GM13977 (cell line): ENCODE measurements at regions of chr11 and their contacts with region 1.

Region 1: GRCh38 chr11:44609001-44609782 is 43.7 kb downstream of the CD82 start:
- DNase-seq: peak; percentile 61
- CTCF ChIP-seq: no peak

Region 2: GRCh38 chr11:44258190-44258489 is 351.1 kb before region 1 on chr11:
- in situ Hi-C with region 1: no loop called
- DNase-seq: no peak
- CTCF ChIP-seq: no peak

Region 3: DNA sequence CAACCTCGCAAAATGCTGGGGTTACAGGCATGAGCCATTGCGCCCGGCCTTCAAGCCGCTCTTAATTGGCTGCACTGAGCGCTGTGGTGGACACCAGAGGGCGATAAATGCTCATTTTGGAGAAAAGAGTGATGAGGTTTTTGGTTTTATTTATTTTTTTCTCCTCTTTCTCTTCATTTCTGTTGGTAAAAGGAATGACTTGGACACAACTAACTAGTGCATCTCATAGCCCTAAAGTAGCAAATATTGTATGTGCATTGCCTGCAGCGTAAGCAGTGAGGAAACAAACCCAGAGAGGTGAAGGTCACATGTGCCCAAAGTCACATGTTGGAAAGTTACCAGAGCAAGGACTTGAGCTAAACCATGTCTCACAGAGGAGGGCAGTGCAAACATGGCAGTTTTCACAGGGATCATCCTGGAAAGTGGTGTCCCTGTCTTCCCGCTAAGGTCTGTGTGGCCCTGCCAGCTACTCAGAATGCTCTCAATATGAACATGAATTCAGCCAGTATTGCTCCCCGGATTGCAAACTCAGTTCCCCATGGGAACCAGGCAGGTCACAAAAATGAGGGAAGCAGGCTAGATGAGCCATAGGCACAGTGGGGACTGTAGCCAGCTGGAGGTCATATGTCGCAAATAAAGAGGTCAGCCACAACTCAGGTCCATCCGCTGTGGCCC is 52.3 kb before region 1 on chr11:
- in situ Hi-C with region 1: loop called (anchors 5 kb)
- DNase-seq: peak; percentile 15
- CTCF ChIP-seq: peak; percentile 80

Region 4: GRCh38 chr11:44936525-44936924 is 327.3 kb after region 1 on chr11:
- in situ Hi-C with region 1: no loop called
- DNase-seq: peak; percentile 88
- CTCF ChIP-seq: peak; percentile 93